HEK293T (cell line): ENCODE measurements at regions of chr17 and their contacts with region 1.

Region 1: DNA sequence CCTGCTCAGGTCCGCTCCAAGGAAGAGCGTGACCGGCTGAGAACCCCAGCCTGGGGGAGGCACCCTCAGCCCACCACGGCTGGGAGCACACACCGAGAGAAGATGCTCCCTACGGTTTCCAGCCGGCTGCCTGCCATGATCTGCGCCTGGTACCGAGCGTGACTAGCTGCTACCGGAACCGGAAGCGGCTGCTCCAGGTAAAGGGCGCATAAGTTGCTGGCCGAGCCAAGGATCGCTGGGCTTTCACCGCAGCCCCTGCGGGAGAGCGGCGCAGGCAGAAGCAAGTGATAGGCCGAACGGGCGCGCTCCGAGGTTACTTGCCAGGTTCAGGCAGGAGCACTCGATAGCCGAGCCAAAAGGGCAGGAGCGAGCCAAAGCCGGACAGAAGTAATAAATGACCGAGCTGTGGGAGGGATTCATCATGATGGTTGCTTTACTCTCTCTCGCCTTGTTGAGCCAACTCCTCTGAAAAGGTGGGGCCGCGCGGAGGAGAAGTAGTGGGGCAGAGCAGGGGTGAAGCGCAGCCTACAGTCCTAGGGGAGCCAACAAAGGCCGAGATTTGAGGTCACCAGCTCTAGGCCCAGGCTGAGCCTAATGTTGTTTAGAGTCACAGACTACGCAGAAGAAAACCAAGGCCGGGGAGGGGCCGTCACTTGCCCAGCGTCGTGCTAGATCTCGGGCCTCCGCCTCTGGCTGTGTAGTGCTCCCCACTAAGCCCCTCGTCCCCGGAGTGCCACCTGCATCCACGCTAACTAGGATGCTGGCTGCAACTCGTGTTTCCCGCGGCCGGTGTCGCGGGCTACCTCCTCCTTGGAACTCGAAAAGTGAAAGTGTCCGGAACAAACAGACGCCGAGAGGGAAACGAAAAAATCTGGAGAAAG is at the start of gene MRPS23:
- DNase-seq: peak; percentile 97

Region 2: GRCh38 chr17:57833179-57833939 is 16.8 kb before region 1 on chr17:
- CTCF ChIA-PET with region 1: interaction called, 10 read pairs
- POLR2A ChIA-PET with region 1: interaction called, 6 read pairs
- DNase-seq: peak; percentile 72

Region 3: DNA sequence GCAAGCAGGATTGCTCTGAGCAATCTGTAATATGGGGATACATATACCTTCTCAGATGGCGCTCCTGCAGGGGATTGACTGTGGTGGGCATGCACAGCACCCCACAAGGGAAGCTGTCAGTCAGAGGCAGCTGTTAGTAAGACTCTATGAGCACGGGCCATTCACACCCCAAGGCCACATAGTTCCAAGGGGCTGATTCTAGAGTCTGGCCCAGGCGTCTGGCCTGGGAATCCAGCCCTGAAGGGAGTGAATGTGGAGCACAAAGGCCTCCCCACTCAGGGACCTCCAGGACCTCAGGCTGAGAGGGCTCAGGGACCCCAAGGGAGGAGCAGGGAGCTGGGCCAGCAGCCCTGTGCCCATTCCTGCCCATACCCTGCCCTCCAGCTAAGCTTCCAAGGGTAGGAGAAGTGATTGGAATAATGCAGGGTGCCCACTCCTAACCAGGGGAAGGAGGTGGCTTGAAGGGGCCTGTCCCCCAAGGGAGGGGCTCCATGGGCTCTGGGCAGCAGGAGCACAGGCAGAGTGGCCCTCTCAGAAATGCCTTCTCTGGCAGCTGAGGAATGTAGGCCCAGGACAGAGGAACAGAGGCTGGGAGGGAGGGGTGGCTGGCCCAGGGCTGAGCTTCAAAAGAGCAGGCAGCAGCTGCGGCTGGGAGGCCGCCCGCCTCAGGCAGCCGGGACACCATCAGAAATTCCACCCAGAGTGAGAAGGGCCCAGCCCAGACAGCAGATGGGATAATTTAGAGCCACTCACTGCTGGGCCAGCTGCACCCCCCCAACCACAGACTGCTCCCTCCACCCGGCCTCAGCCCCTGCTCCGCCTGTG is 48.6 kb after region 1 on chr17:
- CTCF ChIA-PET with region 1: no interaction called
- POLR2A ChIA-PET with region 1: no interaction called
- DNase-seq: no peak

Region 4: GRCh38 chr17:57987580-57988421 is 137.7 kb after region 1 on chr17 and contains the start of gene VEZF1:
- CTCF ChIA-PET with region 1: no interaction called
- POLR2A ChIA-PET with region 1: interaction called, 12 read pairs
- DNase-seq: peak; percentile 74

Region 5: DNA sequence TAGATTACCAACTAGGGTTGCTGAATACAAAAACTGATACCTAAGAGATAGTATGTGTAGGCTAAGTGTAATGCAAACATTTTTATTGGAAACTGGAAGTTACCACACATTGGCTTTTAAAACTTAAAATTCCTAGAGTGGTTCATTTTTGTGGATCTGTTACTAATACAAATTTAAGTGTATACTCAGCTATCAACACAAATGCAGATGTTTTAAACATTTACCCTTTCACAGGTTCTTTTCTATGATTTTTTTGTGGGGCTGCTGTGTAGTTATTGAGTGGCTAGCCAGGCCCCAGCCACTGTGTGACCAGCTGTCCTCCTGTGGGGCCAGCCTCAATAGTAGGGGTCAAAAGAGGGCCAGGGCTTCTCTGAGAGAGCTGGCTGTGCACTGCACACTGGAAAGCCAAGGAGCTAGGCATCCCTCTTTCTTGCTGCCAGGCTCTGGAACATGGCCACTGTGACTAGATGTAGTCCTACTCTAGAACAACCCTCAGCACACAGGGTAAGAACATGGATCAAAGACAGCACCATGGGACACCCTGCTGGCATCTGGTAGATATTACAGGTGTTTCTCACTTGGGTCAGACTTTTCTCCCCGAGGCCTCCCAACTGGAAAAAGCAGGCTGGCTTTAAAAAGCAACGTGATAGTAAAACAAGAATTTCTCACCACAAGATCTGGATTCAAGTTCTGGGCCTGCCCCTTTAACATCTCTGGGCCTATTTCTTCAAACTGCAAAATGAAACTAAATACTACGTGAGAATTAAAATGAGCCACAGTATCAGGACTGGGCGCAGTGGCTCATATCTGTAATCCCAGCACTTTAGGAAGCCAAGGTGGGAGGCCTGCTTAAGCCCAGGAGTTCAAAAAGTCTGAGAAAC is 145.2 kb after region 1 on chr17:
- CTCF ChIA-PET with region 1: interaction called, 84 read pairs
- POLR2A ChIA-PET with region 1: interaction called, 12 read pairs
- DNase-seq: peak; percentile 66